ENCODE measurements at regions of chr3 and their contacts with region 1.

Region 1: GRCh38 chr3:38521391-38521987 is 25.3 kb downstream of the EXOG start:
- DNase-seq: peak; percentile 84
- ATAC-seq: peak; percentile 38
- H3K4me3 ChIP-seq: no peak overlapping the region
- H3K27ac ChIP-seq: no peak overlapping the region
- H3K4me1 ChIP-seq: peaks cover 8% of the 10 kb centered on the region
- H3K27me3 ChIP-seq: no peaks in the 10 kb centered on the region
- CTCF ChIP-seq: peak; percentile 97

Region 2: DNA sequence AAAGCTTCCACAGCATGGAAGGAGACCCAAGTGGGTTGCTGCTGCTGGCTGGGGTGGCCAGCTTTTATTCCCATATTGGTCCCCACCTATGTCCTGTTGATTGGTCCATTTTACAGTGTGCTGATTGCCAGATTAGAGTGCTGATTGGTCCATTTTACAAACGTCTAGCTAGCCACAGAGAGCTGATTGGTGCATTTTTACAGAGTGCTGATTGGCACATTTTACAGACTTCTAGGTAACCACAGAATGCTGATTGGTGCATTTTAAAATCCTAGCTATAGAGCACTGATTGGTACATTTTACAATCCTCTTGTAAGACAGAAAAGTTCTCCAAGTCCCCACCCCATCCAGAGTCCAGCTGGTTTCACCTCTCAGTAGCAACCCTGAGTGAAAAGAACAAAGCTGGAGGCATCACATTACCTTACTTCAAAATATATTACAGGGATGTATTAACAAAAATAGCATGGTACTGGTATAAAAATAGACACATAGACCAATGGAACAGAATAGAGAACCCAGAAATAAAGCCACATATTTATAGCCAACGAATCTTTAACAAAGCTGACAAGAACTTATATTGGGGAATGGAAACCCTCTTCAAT is 75.3 kb before region 1 on chr3:
- CTCF ChIA-PET with region 1: no interaction called
- POLR2A ChIA-PET with region 1: no interaction called
- intact Hi-C with region 1: no loop called
- DNase-seq: no peak
- ATAC-seq: no peak
- H3K4me3 ChIP-seq: no peak overlapping the region
- H3K27ac ChIP-seq: no peak overlapping the region
- H3K4me1 ChIP-seq: no peaks in the 10 kb centered on the region
- H3K27me3 ChIP-seq: no peaks in the 10 kb centered on the region
- CTCF ChIP-seq: no peak

Region 3: GRCh38 chr3:38651154-38651789 is 129.8 kb after region 1 on chr3:
- CTCF ChIA-PET with region 1: interaction called, 6 read pairs
- POLR2A ChIA-PET with region 1: no interaction called
- intact Hi-C with region 1: loop called (anchors 1 kb)
- DNase-seq: peak; percentile 70
- ATAC-seq: peak; percentile 50
- H3K4me3 ChIP-seq: no peak overlapping the region
- H3K27ac ChIP-seq: no peak overlapping the region
- H3K4me1 ChIP-seq: peaks cover 3% of the 10 kb centered on the region; the same call in 1 of the 2 replicates
- H3K27me3 ChIP-seq: peaks cover 42% of the 10 kb centered on the region; the same call in 1 of the 2 replicates
- CTCF ChIP-seq: peak; percentile 89

Region 4: GRCh38 chr3:38662544-38662943 is 141.1 kb after region 1 on chr3:
- CTCF ChIA-PET with region 1: interaction called, 14 read pairs
- POLR2A ChIA-PET with region 1: no interaction called
- intact Hi-C with region 1: loop called (anchors 1 kb)
- DNase-seq: peak; percentile 84
- ATAC-seq: peak; percentile 97
- H3K4me3 ChIP-seq: no peak overlapping the region
- H3K27ac ChIP-seq: no peak overlapping the region
- H3K4me1 ChIP-seq: no peaks in the 10 kb centered on the region
- H3K27me3 ChIP-seq: peaks cover 24% of the 10 kb centered on the region
- CTCF ChIP-seq: peak; percentile 91

Region 5: GRCh38 chr3:39025222-39025970 is 503.9 kb after region 1 on chr3:
- CTCF ChIA-PET with region 1: no interaction called
- POLR2A ChIA-PET with region 1: no interaction called
- intact Hi-C with region 1: loop called (anchors 1 kb)
- DNase-seq: peak; percentile 13
- ATAC-seq: no peak
- H3K4me3 ChIP-seq: no peak overlapping the region
- H3K27ac ChIP-seq: no peak overlapping the region
- H3K4me1 ChIP-seq: no peaks in the 10 kb centered on the region
- H3K27me3 ChIP-seq: peaks cover 46% of the 10 kb centered on the region
- CTCF ChIP-seq: no peak